Motor neuron (in vitro differentiated cells): ENCODE measurements at regions of chr6 and their contacts with region 1.

Region 1: GRCh38 chr6:3281631-3282475 is 23.1 kb downstream of the PSMG4 start:
- ATAC-seq: peak in 6 of 8 experiments; percentile 12 to 55 (median 44)
- H3K4me3 ChIP-seq: no peak overlapping the region
- H3K27ac ChIP-seq: peak overlapping the region; percentile 3 to 32
- H3K4me1 ChIP-seq: peaks cover 20 to 23% of the 10 kb centered on the region in 2 donors

Region 2: DNA sequence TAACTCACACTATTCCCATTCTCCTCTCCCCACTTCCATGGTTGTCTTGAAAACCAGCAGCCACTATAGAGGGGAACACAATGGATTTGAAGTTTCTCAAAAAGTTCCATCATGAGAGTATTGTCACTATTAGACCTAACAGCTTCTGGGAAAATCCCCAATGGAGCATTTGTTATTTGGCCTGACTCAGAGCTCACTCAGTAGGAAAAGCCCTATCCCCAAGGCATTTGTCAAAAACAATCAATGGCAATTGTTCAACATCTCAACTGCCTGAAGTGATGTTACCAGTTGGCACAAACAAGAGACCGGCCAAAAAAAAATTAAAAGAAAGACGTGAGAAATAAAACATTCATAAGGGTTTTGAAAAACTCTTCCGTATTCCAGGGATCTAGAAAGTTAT is 629.9 kb before region 1 on chr6:
- in situ Hi-C with region 1: no loop called
- ATAC-seq: peak in 1 of 8 experiments; percentile 20
- H3K4me3 ChIP-seq: no peak overlapping the region
- H3K27ac ChIP-seq: no peak overlapping the region
- H3K4me1 ChIP-seq: no peaks in the 10 kb centered on the region

Region 3: DNA sequence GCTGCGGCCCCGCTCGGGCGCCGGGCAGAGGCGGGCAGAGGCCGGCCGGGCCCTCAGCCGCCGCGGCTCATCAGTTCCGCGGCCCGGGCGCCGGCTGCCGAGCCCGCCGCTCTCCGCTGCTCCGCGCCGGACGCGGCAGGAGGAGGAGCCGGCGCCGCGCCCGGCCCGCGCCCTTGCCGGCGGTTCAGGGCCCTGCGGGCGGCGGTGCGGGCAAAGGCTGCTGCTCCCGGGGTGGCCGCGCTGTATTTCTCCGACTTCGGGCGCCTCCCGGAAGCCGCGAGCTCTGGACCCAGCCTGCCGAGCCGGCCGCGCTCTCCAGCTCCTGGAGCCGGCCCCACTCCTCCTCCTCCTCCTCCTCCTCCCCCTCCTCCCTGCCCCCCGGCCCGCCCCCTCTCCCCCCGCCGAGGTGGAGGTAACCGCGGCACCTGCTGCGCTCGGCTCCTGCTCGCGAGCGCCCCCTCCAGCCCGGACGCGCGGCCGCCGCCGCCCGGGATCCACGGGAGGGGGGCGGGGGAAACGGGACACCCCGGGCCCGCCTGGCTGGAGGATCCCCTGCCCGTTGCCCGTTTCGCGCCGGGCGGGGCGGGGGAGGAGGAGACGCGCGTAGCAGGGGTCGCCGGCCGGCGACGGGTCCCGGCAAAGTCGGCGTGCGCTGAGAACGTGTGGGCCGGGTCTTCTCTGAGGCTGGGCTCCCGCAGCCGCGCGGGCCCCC is 175.1 kb after region 1 on chr6 and contains the start of gene SLC22A23:
- in situ Hi-C with region 1: loop called in 3 of 9 experiments (anchors 25 kb)
- ATAC-seq: peak; percentile 62 to 76 (median 67)
- H3K4me3 ChIP-seq: peak within 1 kb of the TSS; percentile 43 to 82 (median 72)
- H3K27ac ChIP-seq: peak within 1 kb of the TSS; percentile 25 to 46
- H3K4me1 ChIP-seq: peaks cover 27 to 36% of the 10 kb centered on the region in 2 donors
- total RNA-seq, gene SLC22A23: 10.5 to 24.1 (median 13.2) TPM

Region 4: GRCh38 chr6:3732345-3733141 is 450.7 kb after region 1 on chr6:
- in situ Hi-C with region 1: loop called (anchors 5 to 25 kb)
- ATAC-seq: peak; percentile 43 to 97 (median 90)
- H3K4me3 ChIP-seq: no peak overlapping the region
- H3K27ac ChIP-seq: no peak overlapping the region
- H3K4me1 ChIP-seq: peaks cover 6 to 16% of the 10 kb centered on the region in 2 donors

Region 5: DNA sequence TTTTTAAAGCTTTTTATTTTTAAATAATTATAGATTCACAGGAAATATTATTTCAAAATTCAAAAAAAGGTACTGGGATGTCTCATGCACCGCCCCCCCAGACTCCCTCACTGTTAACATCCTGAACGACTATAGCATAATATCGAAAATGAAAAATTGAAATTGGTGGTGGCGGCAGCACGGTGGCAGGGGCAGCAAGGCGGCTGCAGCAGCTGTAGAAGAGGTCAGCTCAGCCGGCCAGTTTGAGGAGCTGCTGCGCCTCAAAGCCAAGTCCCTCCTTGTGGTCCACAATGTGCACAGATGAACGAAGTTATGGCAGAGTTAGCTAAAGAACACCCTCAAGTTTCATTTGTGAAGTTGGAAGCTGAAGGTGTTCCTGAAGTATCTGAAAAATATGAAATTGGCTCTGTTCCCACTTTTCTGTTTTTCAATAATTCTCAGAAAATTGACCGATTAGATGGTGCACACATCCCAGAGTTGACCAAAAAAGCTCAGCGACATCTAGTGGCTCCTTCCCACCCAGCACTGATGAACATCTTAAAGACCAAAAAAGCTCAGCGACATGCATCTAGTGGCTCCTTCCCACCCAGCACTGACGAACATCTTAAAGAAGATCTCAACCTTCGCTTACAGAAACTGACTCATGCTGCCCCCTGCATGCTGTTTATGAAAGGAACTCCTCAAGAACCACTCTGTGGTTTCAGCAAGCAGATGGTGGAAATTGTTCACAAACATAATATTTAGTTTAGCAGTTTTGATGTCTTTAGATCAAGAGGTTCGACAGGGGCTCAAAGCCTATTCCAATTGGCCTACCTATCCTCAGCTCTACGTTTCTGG is 696.2 kb after region 1 on chr6:
- in situ Hi-C with region 1: loop called in 1 of 9 experiments (anchors 25 kb)
- ATAC-seq: peak; percentile 69 to 100 (median 80)
- H3K4me3 ChIP-seq: no peak overlapping the region
- H3K27ac ChIP-seq: no peak overlapping the region
- H3K4me1 ChIP-seq: no peaks in the 10 kb centered on the region

Region 6: DNA sequence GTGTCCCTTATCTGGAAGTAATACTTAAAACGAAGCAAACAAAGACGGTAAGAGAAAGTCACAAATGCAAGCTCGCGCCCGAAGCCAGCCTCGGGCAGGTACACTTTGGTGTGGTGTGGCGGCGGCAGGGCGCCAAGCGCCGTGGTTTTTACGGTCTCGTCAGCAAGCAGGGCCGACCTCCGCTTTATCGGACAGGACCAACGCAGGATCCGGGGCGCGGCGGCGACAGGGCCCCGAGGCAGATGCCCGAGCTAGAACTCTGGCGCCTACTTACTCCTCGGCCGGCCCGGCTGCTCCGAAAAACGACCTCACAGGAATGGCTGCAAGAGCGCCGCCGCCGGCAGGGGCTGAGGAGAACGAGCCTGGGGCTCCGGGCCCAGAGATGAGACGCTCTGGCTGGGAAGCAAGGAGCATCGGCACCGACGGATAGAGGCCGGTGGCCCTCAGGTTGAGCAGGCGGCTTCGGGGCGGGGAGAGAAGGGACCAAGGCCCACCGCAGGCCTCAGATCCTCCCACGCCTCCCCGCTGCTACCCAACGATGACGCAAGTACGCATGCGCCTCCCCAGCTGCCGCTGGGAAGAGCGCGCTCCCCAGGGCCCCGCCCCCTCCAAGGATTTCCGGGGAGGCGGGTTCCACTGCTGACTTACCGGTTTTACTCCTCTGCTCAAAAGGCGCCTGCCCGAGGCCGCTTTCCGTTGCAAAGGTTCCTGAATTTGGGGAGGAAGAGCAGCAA is 736.5 kb after region 1 on chr6:
- in situ Hi-C with region 1: loop called in 1 of 9 experiments (anchors 25 kb)
- ATAC-seq: peak; percentile 54 to 80 (median 76)
- H3K4me3 ChIP-seq: peak overlapping the region; percentile 62 to 89 (median 71)
- H3K27ac ChIP-seq: peak overlapping the region; percentile 92 to 95
- H3K4me1 ChIP-seq: peaks cover 11 to 28% of the 10 kb centered on the region in 2 donors